ENCODE measurements at regions of chr1 and their contacts with region 1.

Region 1: GRCh38 chr1:92291372-92291999 is 7.3 kb downstream of the GLMN start:
- DNase-seq: peak; percentile 75
- H3K4me3 ChIP-seq: no peak overlapping the region
- H3K27ac ChIP-seq: no peak overlapping the region
- H3K4me1 ChIP-seq: no peaks in the 10 kb centered on the region
- H3K27me3 ChIP-seq: no peaks in the 10 kb centered on the region
- CTCF ChIP-seq: peak; percentile 59 to 62
- POLR2A ChIP-seq: no peak

Region 2: GRCh38 chr1:91511386-91511785 is 780.1 kb before region 1 on chr1:
- CTCF ChIA-PET with region 1: interaction called, 30 read pairs
- POLR2A ChIA-PET with region 1: no interaction called
- dilution Hi-C with region 1: no loop called
- intact Hi-C with region 1: loop called (anchors 2 kb)
- DNase-seq: peak; percentile 57
- H3K4me3 ChIP-seq: no peak overlapping the region
- H3K27ac ChIP-seq: no peak overlapping the region
- H3K4me1 ChIP-seq: no peaks in the 10 kb centered on the region
- H3K27me3 ChIP-seq: no peaks in the 10 kb centered on the region
- CTCF ChIP-seq: peak; percentile 24 to 43
- POLR2A ChIP-seq: no peak

Region 3: DNA sequence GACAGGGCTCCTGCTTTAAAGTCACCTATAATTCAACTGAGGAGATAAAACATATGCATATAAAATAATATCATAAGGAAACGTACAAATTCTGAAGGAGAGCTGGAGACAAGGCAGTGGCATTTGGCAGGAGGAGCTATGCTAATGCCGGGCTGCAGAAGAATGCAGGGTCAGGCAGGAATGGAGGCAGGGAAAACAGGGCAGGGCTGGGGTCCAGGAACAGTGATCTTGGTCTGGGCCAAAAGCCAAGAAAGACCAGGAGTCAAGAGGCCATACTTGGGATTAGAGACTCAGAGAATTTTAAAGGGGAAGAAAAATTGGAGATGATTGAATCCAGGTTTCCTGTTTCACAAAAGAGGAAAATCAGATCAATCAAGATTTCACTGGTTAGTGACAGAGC is 362.2 kb before region 1 on chr1:
- CTCF ChIA-PET with region 1: interaction called, 91 read pairs
- POLR2A ChIA-PET with region 1: no interaction called
- dilution Hi-C with region 1: no loop called
- intact Hi-C with region 1: loop called (anchors 1 kb)
- DNase-seq: peak; percentile 53
- H3K4me3 ChIP-seq: no peak overlapping the region
- H3K27ac ChIP-seq: no peak overlapping the region
- H3K4me1 ChIP-seq: peaks cover 4% of the 10 kb centered on the region
- H3K27me3 ChIP-seq: no peaks in the 10 kb centered on the region
- CTCF ChIP-seq: no peak
- POLR2A ChIP-seq: no peak

Region 4: GRCh38 chr1:92004129-92004528 is 287.4 kb before region 1 on chr1:
- CTCF ChIA-PET with region 1: interaction called, 232 read pairs
- POLR2A ChIA-PET with region 1: no interaction called
- dilution Hi-C with region 1: no loop called
- intact Hi-C with region 1: no loop called
- DNase-seq: no peak
- H3K4me3 ChIP-seq: no peak overlapping the region
- H3K27ac ChIP-seq: no peak overlapping the region
- H3K4me1 ChIP-seq: no peaks in the 10 kb centered on the region
- H3K27me3 ChIP-seq: no peaks in the 10 kb centered on the region
- CTCF ChIP-seq: no peak
- POLR2A ChIP-seq: no peak

Region 5: GRCh38 chr1:92080128-92080985 is 211.1 kb before region 1 on chr1 and contains the start of gene BTBD8:
- CTCF ChIA-PET with region 1: interaction called, 11 read pairs
- POLR2A ChIA-PET with region 1: no interaction called
- dilution Hi-C with region 1: no loop called
- intact Hi-C with region 1: loop called (anchors 10 kb)
- DNase-seq: peak; percentile 78
- H3K4me3 ChIP-seq: peak within 1 kb of the TSS; percentile 54 to 93 (median 70)
- H3K27ac ChIP-seq: peak within 1 kb of the TSS; percentile 10
- H3K4me1 ChIP-seq: peaks cover 2% of the 10 kb centered on the region
- H3K27me3 ChIP-seq: peaks cover 0 to 2% of the 10 kb centered on the region in 2 experiments
- CTCF ChIP-seq: no peak
- POLR2A ChIP-seq: no peak
- total RNA-seq, gene BTBD8: 1.5 and 1.7 TPM in 2 replicates

Region 6: DNA sequence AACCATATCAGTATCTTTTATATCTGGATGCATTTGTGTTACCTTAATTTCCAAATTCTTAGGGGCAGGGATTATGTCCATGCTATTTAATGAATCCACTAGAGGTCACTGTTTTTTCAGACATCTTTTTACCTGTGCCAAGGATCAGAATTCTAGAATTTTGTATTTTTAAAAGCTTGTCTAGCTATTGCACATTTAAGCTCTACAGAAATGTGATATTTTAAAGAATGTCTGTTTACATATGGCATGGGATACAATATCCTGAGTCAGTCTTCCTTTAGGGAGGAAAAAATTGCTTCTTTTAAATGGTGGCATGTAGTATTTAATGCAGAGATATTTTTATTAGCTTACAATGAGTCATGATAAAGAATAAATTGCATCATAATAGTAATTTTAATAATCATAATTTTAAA is 18.7 kb after region 1 on chr1:
- CTCF ChIA-PET with region 1: interaction called, 11 read pairs
- POLR2A ChIA-PET with region 1: no interaction called
- dilution Hi-C with region 1: no loop called
- intact Hi-C with region 1: no loop called
- DNase-seq: peak; percentile 33
- H3K4me3 ChIP-seq: no peak overlapping the region
- H3K27ac ChIP-seq: no peak overlapping the region
- H3K4me1 ChIP-seq: no peaks in the 10 kb centered on the region
- H3K27me3 ChIP-seq: no peaks in the 10 kb centered on the region
- CTCF ChIP-seq: peak; percentile 23 to 28
- POLR2A ChIP-seq: no peak

Region 7: GRCh38 chr1:92346866-92347640 is 55.6 kb after region 1 on chr1:
- CTCF ChIA-PET with region 1: no interaction called
- POLR2A ChIA-PET with region 1: no interaction called
- dilution Hi-C with region 1: no loop called
- intact Hi-C with region 1: no loop called
- DNase-seq: no peak
- H3K4me3 ChIP-seq: no peak overlapping the region
- H3K27ac ChIP-seq: no peak overlapping the region
- H3K4me1 ChIP-seq: no peaks in the 10 kb centered on the region
- H3K27me3 ChIP-seq: no peaks in the 10 kb centered on the region
- CTCF ChIP-seq: no peak
- POLR2A ChIP-seq: no peak

Measured in endothelial cell of umbilical vein (primary cell).